Common myeloid progenitor, CD34-positive (primary cell): ENCODE measurements at regions of chr2 and their contacts with region 1.

Region 1: GRCh38 chr2:218852911-218853667 is 6.5 kb upstream of the WNT6 start:
- DNase-seq: peak; percentile 72 to 89 (median 85)
- H3K4me3 ChIP-seq: no peak overlapping the region
- H3K27ac ChIP-seq: no peak overlapping the region
- H3K4me1 ChIP-seq: peaks cover 0 to 8% (median 3%) of the 10 kb centered on the region in 4 experiments
- H3K27me3 ChIP-seq: peaks cover 8 to 79% (median 39%) of the 10 kb centered on the region in 5 experiments

Region 2: DNA sequence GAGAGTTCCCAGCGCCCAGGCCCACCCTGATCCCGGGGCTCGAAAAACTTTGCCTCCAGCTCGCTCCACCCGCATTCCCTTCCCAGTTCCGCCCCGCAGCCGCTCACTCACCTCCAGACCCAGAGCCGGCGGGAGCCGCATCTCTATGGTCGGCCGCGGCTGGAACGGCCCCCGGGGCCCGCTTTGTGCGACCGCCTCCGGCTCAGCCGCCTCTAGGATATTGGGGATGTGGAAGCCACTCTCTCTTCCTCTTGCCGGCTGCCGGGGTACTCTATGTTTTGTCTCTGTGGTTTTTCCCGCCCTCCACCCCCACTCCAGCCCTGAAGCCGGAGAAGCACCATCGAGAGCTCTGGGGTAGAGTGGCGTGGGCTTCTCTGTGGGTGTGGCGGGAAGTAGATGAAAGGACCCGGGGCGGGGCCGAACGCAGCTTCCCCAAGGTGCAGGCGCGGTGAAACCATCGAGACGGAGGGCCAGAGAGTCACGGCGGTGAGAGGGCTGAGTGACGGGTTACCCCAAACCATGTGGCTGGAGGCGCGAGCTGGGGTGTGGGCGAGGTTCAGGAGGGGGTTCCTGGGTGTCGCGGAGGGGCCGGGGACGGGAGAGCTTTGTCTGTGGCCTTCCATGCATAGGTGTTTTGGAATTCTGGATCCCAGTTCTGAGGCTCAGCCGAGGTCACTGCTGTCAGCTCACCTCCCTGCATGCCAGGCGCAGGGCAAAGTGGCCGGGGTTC is 193.7 kb before region 1 on chr2 and contains the starts of genes BCS1L and ZNF142:
- CTCF ChIA-PET with region 1: interaction called, 14 read pairs
- POLR2A ChIA-PET with region 1: no interaction called
- DNase-seq: peak; percentile 94 to 95 (median 95)
- H3K4me3 ChIP-seq: peak within 1 kb of the TSS; percentile 81 to 96 (median 90)
- H3K27ac ChIP-seq: peak within 1 kb of the TSS; percentile 18 to 60
- H3K4me1 ChIP-seq: peaks cover 6 to 19% (median 17%) of the 10 kb centered on the region in 4 experiments
- H3K27me3 ChIP-seq: no peaks in the 10 kb centered on the region

Region 3: GRCh38 chr2:218679119-218679518 is 174.0 kb before region 1 on chr2:
- CTCF ChIA-PET with region 1: no interaction called
- POLR2A ChIA-PET with region 1: no interaction called
- DNase-seq: peak in 1 of 3 donors; percentile 3
- H3K4me3 ChIP-seq: no peak overlapping the region
- H3K27ac ChIP-seq: no peak overlapping the region
- H3K4me1 ChIP-seq: no peaks in the 10 kb centered on the region
- H3K27me3 ChIP-seq: no peaks in the 10 kb centered on the region

Region 4: GRCh38 chr2:218710687-218711549 is 142.2 kb before region 1 on chr2 and contains the start of gene TTLL4:
- CTCF ChIA-PET with region 1: interaction called, 11 read pairs
- POLR2A ChIA-PET with region 1: no interaction called
- DNase-seq: peak; percentile 96 to 98 (median 98)
- H3K4me3 ChIP-seq: peak within 1 kb of the TSS; percentile 75 to 89 (median 82)
- H3K27ac ChIP-seq: peak within 1 kb of the TSS; percentile 11 to 77
- H3K4me1 ChIP-seq: peaks cover 8 to 21% (median 15%) of the 10 kb centered on the region in 4 experiments
- H3K27me3 ChIP-seq: no peaks in the 10 kb centered on the region

Region 5: GRCh38 chr2:218839430-218839829 is 13.7 kb before region 1 on chr2:
- CTCF ChIA-PET with region 1: no interaction called
- POLR2A ChIA-PET with region 1: no interaction called
- DNase-seq: no peak
- H3K4me3 ChIP-seq: no peak overlapping the region
- H3K27ac ChIP-seq: no peak overlapping the region
- H3K4me1 ChIP-seq: peaks cover 0 to 3% (median 0%) of the 10 kb centered on the region in 4 experiments
- H3K27me3 ChIP-seq: peaks cover 3 to 17% (median 13%) of the 10 kb centered on the region in 5 experiments

Region 6: DNA sequence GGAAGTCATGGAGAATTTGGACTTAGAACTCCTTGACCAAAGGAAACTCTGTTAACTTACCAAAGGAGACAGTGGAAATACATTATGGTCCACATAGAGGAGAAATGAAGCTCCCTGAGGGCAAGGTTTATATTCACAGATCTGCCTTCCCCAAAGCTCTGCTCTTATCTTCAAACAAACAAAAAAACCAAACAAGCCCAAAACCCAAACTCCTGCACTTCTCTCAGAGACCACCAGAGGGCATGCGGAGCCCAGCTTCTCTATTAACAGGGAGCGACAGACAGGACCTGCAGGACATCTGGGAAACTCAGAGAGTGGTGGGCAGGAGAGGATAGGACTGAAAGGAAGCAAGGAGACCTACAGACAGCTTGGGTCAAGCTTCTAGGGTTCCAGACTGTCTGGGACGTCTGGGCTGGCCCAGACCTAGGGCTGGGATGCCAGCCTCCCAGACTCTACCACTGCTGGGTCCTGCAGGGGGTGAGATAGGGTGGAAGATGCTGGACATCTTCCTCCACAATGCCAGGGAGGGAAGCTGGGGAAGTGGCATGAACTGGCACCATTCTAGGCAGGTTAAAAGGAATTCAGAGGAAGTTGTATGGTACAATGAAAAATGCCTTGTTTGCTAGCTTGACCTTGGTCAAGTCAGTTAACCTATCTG is 23.6 kb after region 1 on chr2:
- CTCF ChIA-PET with region 1: interaction called, 233 read pairs
- POLR2A ChIA-PET with region 1: no interaction called
- DNase-seq: peak; percentile 68 to 84 (median 74)
- H3K4me3 ChIP-seq: no peak overlapping the region
- H3K27ac ChIP-seq: no peak overlapping the region
- H3K4me1 ChIP-seq: peaks cover 0 to 42% (median 24%) of the 10 kb centered on the region in 4 experiments
- H3K27me3 ChIP-seq: peaks cover 13 to 99% (median 61%) of the 10 kb centered on the region in 5 experiments

Region 7: DNA sequence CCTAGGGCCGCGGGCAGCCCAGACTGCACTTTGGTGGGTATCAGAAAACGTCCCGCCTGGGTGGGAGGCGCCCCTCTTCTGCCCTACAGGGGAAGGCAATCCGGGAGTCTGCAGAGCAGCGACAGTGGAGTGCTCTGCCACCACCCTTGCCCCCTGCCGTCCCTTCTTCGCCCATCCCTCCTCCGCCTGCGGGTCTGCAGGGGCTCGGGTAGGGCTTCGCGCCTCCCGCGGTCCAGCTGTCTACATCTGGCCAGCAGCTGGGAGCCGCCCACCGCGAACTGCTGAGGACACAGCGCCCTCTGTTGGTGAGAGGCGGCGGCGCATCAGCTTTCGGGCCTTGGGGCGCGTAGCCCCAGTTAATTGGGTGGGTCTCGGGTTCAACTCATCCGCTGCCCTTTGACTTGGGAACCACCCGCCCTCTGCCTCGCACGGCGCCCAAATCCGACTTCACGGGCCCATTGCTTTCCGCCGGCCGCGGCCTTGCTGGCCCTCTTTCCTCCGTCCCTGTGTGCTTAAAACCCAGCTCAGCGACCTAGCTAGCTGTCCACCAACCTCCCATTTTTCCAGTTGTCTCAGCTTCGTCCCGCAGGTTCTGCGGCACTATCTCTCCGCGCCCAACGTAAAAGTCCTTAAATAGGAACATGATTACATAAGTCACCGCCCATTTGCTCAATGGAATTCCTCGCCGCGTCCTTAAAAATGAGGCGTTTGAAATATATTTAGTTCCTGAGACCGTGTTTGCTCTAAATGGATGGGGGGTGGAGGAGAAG is 45.2 kb after region 1 on chr2:
- CTCF ChIA-PET with region 1: interaction called, 94 read pairs
- POLR2A ChIA-PET with region 1: no interaction called
- DNase-seq: peak; percentile 51 to 69 (median 68)
- H3K4me3 ChIP-seq: peak overlapping the region in 3 of 7 experiments; percentile 3 to 72 (median 57)
- H3K27ac ChIP-seq: no peak overlapping the region
- H3K4me1 ChIP-seq: peaks cover 1 to 54% (median 37%) of the 10 kb centered on the region in 4 experiments
- H3K27me3 ChIP-seq: peaks cover 18 to 73% (median 30%) of the 10 kb centered on the region in 5 experiments

Region 8: GRCh38 chr2:218944759-218945404 is 91.8 kb after region 1 on chr2:
- CTCF ChIA-PET with region 1: no interaction called
- POLR2A ChIA-PET with region 1: no interaction called
- DNase-seq: no peak
- H3K4me3 ChIP-seq: no peak overlapping the region
- H3K27ac ChIP-seq: no peak overlapping the region
- H3K4me1 ChIP-seq: no peaks in the 10 kb centered on the region
- H3K27me3 ChIP-seq: peaks cover 0 to 27% (median 2%) of the 10 kb centered on the region in 5 experiments